ENCODE measurements at regions of chr9 and their contacts with region 1.

Region 1: DNA sequence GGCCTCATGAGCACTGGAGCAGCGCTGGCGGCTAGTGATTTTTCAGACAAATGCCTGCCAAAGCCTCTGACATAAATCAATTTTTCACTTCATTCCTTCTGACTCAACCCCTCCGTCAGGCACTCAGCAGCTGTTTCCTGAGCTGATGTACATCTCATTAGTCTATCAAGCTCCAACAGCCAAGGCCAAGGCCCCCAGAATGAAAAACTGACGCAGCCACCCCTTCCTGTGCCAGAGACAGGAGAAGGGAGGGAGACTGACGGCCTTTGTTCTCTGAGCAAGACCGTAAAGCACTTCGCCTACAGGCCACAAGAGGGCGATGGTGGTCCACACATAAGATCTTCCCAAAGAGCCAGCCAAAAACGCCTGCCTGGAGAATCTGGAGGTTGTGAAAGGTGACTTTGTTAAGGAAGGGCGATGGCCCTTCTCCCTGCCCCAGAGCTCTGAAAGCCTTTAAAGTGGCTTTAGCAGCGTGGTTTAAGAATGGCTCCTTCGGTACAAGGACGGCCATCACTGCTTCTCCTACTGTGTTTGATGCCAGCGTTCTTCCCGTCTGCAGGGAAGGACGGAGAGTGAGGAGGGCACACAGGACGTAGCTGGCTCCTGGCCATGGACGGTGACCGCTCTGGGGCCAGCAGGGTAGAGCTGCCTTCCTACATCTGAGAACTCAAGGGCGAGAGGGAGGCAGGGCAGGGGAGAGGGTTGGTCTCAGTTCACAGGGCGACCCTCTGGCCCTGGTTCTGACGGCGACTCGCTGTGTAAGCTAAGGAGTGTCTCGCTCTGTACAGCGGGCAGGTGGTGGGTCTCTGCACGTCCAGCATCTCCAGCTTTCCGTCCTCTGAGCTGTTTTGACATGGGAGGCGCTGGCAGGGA is 37.0 kb downstream of the ALG2 start:
- DNase-seq: peak; percentile 95
- H3K4me3 ChIP-seq: no peak overlapping the region
- H3K27ac ChIP-seq: no peak overlapping the region
- H3K4me1 ChIP-seq: peaks cover 15% of the 10 kb centered on the region
- H3K27me3 ChIP-seq: no peaks in the 10 kb centered on the region
- CTCF ChIP-seq: peak; percentile 94

Region 2: DNA sequence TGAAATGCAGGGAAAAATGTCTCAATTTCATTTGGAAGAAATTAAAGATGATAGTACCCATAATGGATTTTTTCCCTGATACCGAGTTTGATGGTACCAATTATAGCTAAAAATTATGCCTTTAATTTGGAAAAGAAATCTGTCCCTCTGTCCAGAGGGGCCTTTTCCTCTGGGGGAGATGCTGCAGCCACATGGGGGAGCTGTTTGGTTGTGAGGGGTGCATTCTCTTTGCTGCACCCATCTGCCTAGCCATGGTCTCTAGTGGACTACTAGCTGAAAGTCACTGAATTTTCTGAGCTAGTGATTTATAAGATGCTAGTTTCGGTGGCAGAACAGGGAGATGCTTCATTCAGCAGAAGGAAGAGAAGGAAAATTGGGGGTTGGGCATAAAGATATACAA is 47.0 kb after region 1 on chr9:
- CTCF ChIA-PET with region 1: no interaction called
- POLR2A ChIA-PET with region 1: no interaction called
- intact Hi-C with region 1: loop called (anchors 1 kb)
- DNase-seq: peak; percentile 37
- H3K4me3 ChIP-seq: no peak overlapping the region
- H3K27ac ChIP-seq: no peak overlapping the region
- H3K4me1 ChIP-seq: no peaks in the 10 kb centered on the region
- H3K27me3 ChIP-seq: no peaks in the 10 kb centered on the region
- CTCF ChIP-seq: peak; percentile 71

Region 3: GRCh38 chr9:99748266-99748665 is 563.6 kb after region 1 on chr9:
- CTCF ChIA-PET with region 1: no interaction called
- POLR2A ChIA-PET with region 1: no interaction called
- intact Hi-C with region 1: loop called (anchors 10 kb)
- DNase-seq: no peak
- H3K4me3 ChIP-seq: no peak overlapping the region
- H3K27ac ChIP-seq: no peak overlapping the region
- H3K4me1 ChIP-seq: no peaks in the 10 kb centered on the region
- H3K27me3 ChIP-seq: no peaks in the 10 kb centered on the region
- CTCF ChIP-seq: no peak

Region 4: GRCh38 chr9:100216178-100216787 is 1031.6 kb after region 1 on chr9:
- CTCF ChIA-PET with region 1: no interaction called
- POLR2A ChIA-PET with region 1: no interaction called
- intact Hi-C with region 1: loop called (anchors 5 kb)
- DNase-seq: peak; percentile 75
- H3K4me3 ChIP-seq: no peak overlapping the region
- H3K27ac ChIP-seq: no peak overlapping the region
- H3K4me1 ChIP-seq: no peaks in the 10 kb centered on the region
- H3K27me3 ChIP-seq: no peaks in the 10 kb centered on the region
- CTCF ChIP-seq: peak; percentile 83

Region 5: GRCh38 chr9:100437860-100438805 is 1253.4 kb after region 1 on chr9:
- CTCF ChIA-PET with region 1: no interaction called
- POLR2A ChIA-PET with region 1: no interaction called
- intact Hi-C with region 1: loop called (anchors 5 kb)
- DNase-seq: peak; percentile 85
- H3K4me3 ChIP-seq: no peak overlapping the region
- H3K27ac ChIP-seq: no peak overlapping the region
- H3K4me1 ChIP-seq: no peaks in the 10 kb centered on the region
- H3K27me3 ChIP-seq: no peaks in the 10 kb centered on the region
- CTCF ChIP-seq: peak; percentile 94

Measured in A673 (cell line).